Activated CD4-positive, alpha-beta T cell treated with anti-CD3 and anti-CD28 coated beads for 36 hours (primary cell): ENCODE measurements at regions of chr18 and their contacts with region 1.

Region 1: GRCh38 chr18:41949206-41949920 is 5.7 kb upstream of the PIK3C3 start:
- DNase-seq: no peak
- ATAC-seq: no peak
- H3K4me3 Mint-ChIP-seq: no peak overlapping the region
- H3K27ac Mint-ChIP-seq: no peak overlapping the region
- H3K4me1 Mint-ChIP-seq: peaks cover 13% of the 10 kb centered on the region
- H3K27me3 Mint-ChIP-seq: peaks cover 19% of the 10 kb centered on the region

Region 2: DNA sequence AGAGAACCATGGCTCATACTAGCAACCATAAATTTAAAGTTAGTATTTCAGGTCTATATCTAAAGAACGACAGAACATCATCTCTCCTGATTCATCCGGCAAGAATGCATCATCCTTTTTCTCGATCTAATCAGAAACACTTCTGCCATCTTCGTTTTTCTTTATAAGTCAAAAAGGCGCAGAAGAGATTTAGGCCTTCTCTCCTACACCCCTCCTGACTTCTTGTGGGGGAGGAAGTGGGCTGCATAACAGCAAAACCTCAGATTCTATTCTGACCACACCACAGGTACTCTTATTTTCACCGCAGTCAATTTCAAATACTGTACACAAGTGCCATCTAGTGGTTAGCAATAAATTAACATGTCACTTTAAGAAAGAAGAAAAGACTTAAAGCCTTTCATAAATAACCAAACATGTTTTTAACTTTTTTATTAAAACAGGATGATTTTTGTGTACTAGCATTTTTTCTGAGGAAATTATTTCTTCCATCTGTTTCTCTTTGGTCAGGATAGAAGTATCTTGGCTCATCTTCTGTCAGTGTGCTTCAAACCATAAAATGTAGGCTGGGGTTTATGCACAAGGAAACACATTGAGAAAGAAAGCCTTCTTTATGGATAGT is 42.7 kb before region 1 on chr18:
- CTCF ChIA-PET with region 1: no interaction called
- POLR2A ChIA-PET with region 1: no interaction called
- intact Hi-C with region 1: loop called in 1 of 2 experiments (anchors 1 kb)
- DNase-seq: peak; percentile 55
- ATAC-seq: peak; percentile 92
- H3K4me3 Mint-ChIP-seq: peak overlapping the region; percentile 29
- H3K27ac Mint-ChIP-seq: peak overlapping the region; percentile 19
- H3K4me1 Mint-ChIP-seq: peaks cover 12% of the 10 kb centered on the region
- H3K27me3 Mint-ChIP-seq: no peaks in the 10 kb centered on the region

Region 3: GRCh38 chr18:41972067-41972925 is 22.9 kb after region 1 on chr18:
- CTCF ChIA-PET with region 1: no interaction called
- POLR2A ChIA-PET with region 1: no interaction called
- intact Hi-C with region 1: no loop called
- DNase-seq: no peak
- ATAC-seq: no peak
- H3K4me3 Mint-ChIP-seq: no peak overlapping the region
- H3K27ac Mint-ChIP-seq: no peak overlapping the region
- H3K4me1 Mint-ChIP-seq: peaks cover 58% of the 10 kb centered on the region
- H3K27me3 Mint-ChIP-seq: no peaks in the 10 kb centered on the region

Region 4: DNA sequence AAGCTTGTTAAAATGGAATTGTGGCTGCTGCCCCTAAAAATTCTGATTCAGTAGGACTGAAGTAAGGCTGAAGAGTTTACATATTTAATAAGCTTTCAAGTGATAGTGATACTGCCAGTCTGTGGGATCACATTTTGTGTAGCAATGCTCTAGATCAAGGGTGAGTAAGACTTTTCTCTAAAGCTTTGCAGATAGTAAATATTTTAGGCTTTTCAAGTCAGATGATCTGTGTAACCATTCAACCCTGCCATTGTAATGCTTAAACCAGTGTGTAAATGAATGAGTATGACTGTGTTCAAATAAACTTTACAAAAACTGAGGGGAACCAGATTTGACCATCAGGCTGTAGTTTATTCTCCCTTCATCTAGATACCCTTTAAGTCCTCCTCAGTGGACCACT is 98.4 kb after region 1 on chr18:
- CTCF ChIA-PET with region 1: no interaction called
- POLR2A ChIA-PET with region 1: no interaction called
- intact Hi-C with region 1: no loop called
- DNase-seq: no peak
- ATAC-seq: no peak
- H3K4me3 Mint-ChIP-seq: no peak overlapping the region
- H3K27ac Mint-ChIP-seq: no peak overlapping the region
- H3K4me1 Mint-ChIP-seq: peaks cover 6% of the 10 kb centered on the region
- H3K27me3 Mint-ChIP-seq: no peaks in the 10 kb centered on the region